Transverse colon (tissue), 4 donors: ENCODE measurements at regions of chr15 and their contacts with region 1.

Region 1: DNA sequence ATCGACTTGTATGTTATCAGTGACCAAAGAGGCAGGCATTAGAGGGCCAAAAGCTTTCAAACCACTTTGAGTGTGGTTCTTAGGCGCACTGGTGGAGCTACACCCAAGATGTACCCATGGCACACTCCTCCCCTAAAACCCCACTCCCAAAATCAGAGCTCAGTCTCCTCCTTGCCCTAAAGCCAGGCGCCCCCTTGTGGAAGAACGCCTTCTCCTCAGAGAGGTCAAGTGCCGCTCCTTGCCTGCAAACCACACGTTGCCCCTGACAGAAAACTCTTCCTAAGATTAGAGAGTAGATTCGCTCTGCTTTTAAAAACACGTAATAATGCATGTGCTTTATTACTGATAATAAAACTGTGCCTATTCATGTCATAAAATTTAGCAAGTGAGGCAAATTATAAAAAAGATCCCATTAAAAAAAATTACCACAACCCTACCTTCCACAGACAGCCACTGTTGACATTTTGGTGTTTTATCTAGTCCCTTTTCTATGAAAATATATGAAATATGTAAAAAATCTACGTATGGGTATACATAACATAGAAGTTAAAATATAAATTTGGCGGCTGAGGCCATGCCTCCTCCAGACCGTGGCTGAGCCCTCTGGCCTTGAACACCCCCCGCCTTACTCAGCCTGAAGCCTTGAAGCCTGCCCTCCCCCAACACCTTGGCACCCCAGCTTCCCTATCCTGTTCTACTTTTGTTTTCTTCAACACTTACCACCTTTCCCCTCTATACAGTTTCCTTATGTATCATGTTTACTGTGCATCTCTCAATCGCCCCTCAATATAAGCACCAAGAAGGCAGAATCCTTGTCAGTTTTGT is 33.5 kb downstream of the BCL2L10 start:
- DNase-seq: peak; percentile 88
- H3K4me3 ChIP-seq: no peak overlapping the region
- H3K27ac ChIP-seq: no peak overlapping the region
- H3K4me1 ChIP-seq: peaks cover 0 to 40% (median 10%) of the 10 kb centered on the region in 4 donors
- H3K27me3 ChIP-seq: no peaks in the 10 kb centered on the region
- CTCF ChIP-seq: peak; percentile 80 to 88 (median 83)
- EP300 ChIP-seq: no peak
- POLR2A ChIP-seq: no peak

Region 2: DNA sequence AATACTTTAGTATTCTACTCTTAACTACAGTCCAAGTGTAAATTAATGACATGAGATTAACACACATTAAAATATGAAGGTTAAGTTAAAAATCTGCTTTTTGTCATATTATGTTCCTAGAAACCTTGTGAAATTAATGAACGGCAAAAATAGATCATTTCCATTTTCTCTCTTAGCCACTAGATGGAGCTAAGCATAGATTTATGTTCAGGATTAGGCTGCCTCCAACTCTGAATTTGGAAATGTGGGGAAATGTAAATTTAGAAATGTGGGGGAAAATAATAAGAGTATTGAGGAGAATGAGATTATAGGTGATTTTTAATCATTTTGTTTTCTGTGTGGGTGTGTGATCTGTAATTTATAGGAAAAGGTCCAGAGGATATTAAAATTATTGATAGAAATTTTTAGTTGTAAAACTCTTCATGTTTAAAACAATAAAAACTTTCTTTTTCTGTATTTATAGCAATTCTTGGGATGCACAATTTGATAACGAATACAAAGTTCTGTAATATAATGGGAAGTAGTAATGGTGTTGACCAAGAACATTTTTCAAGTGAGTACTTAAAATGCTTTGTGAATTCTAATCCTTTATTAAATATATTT is 190.4 kb before region 1 on chr15:
- in situ Hi-C with region 1: no loop called
- intact Hi-C with region 1: loop called (anchors 5 kb)
- DNase-seq: no peak
- H3K4me3 ChIP-seq: no peak overlapping the region
- H3K27ac ChIP-seq: no peak overlapping the region
- H3K4me1 ChIP-seq: peaks cover 0 to 12% (median 8%) of the 10 kb centered on the region in 4 donors
- H3K27me3 ChIP-seq: no peaks in the 10 kb centered on the region
- CTCF ChIP-seq: peak; percentile 60 to 74 (median 66)
- EP300 ChIP-seq: no peak
- POLR2A ChIP-seq: no peak

Region 3: GRCh38 chr15:51971375-51972133 is 107.5 kb before region 1 on chr15 and contains the start of gene LEO1:
- in situ Hi-C with region 1: no loop called
- intact Hi-C with region 1: loop called (anchors 10 kb)
- DNase-seq: peak; percentile 92
- H3K4me3 ChIP-seq: peak within 1 kb of the TSS; percentile 63 to 95 (median 72)
- H3K27ac ChIP-seq: peak within 1 kb of the TSS; percentile 90 to 93 (median 91)
- H3K4me1 ChIP-seq: peaks cover 6 to 19% (median 15%) of the 10 kb centered on the region in 4 donors
- H3K27me3 ChIP-seq: no peaks in the 10 kb centered on the region
- CTCF ChIP-seq: peak; percentile 20 to 63 (median 36)
- EP300 ChIP-seq: no peak
- POLR2A ChIP-seq: peak; percentile 72
- total RNA-seq, gene LEO1: 27.2 to 38.2 (median 30.9) TPM